Activated CD8-positive, alpha-beta memory T cell treated with anti-CD3 and anti-CD28 coated beads, Interleukin-2, amount 10 ng/mL, durations not matched to agents 7 days and 5 days (primary cell): ENCODE measurements at regions of chr12 and their contacts with region 1.

Region 1: DNA sequence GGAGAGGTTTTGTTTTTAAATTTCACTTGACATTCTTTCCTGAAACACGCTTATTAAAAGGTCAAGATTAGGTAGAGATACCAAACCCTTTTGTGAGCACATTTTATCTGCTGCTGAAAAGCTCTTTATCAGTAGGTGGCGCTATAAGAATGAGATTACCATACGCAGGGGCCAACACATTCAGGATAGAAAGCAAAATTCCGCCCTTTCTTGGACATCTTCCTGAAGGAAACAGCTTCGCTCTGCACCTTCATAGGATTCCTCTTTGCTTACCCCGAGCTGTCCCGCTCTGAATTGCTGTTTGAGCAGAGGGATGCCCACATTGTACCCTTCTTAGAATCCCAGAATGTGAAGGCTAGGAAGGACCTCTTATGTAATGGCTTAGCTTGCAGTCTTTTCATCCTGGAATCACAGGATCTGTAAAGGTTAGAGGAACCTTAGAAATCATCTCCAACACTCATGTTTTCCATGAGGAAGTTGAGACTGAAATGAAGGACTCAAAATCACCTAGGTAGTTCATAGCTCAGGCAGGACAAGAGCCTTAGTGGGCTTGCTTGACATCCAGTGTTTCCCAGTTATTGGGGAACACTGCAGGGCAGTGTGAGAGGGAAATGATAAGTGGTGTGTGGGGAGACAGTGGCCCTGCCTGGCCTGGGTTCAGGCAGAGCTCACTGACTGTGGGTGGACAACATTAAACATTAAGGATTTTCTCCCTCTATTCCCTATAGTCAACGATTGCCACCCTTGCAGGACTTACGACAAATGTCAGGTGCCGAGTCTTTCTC is 38.7 kb upstream of the CRY1 start:
- DNase-seq: peak; percentile 40
- ATAC-seq: no peak
- H3K4me3 Mint-ChIP-seq: no peak overlapping the region
- H3K27ac Mint-ChIP-seq: no peak overlapping the region
- H3K4me1 Mint-ChIP-seq: peaks cover 7% of the 10 kb centered on the region
- H3K27me3 Mint-ChIP-seq: peaks cover 5% of the 10 kb centered on the region

Region 2: DNA sequence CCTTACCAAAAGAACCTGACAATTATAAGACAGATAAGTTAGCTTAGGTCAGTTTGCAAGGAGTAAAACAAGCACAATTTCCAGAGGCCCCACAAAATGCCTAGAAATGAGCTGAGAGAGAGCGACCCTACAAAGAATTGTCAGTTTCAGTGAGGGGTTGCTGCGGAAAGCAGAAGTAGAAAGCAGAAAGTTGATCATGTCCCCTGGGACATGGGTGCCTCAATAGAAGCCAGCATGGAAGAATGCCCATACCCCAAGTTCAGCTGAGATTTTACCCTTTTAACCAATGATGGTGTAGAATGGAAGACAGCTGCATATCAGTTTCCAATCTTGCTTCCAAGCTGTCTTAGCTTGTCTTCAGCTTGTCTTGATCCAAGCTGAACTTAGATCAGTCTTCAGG is 16.9 kb before region 1 on chr12:
- CTCF ChIA-PET with region 1: interaction called, 19 read pairs
- DNase-seq: no peak
- ATAC-seq: no peak
- H3K4me3 Mint-ChIP-seq: no peak overlapping the region
- H3K27ac Mint-ChIP-seq: no peak overlapping the region
- H3K4me1 Mint-ChIP-seq: peaks cover 2% of the 10 kb centered on the region
- H3K27me3 Mint-ChIP-seq: peaks cover 26% of the 10 kb centered on the region

Region 3: GRCh38 chr12:107317751-107318613 is 186.0 kb after region 1 on chr12:
- CTCF ChIA-PET with region 1: interaction called, 10 read pairs
- DNase-seq: peak; percentile 93
- ATAC-seq: peak; percentile 80
- H3K4me3 Mint-ChIP-seq: peak overlapping the region; percentile 79
- H3K27ac Mint-ChIP-seq: no peak overlapping the region
- H3K4me1 Mint-ChIP-seq: peaks cover 33% of the 10 kb centered on the region
- H3K27me3 Mint-ChIP-seq: peaks cover 54% of the 10 kb centered on the region

Region 4: DNA sequence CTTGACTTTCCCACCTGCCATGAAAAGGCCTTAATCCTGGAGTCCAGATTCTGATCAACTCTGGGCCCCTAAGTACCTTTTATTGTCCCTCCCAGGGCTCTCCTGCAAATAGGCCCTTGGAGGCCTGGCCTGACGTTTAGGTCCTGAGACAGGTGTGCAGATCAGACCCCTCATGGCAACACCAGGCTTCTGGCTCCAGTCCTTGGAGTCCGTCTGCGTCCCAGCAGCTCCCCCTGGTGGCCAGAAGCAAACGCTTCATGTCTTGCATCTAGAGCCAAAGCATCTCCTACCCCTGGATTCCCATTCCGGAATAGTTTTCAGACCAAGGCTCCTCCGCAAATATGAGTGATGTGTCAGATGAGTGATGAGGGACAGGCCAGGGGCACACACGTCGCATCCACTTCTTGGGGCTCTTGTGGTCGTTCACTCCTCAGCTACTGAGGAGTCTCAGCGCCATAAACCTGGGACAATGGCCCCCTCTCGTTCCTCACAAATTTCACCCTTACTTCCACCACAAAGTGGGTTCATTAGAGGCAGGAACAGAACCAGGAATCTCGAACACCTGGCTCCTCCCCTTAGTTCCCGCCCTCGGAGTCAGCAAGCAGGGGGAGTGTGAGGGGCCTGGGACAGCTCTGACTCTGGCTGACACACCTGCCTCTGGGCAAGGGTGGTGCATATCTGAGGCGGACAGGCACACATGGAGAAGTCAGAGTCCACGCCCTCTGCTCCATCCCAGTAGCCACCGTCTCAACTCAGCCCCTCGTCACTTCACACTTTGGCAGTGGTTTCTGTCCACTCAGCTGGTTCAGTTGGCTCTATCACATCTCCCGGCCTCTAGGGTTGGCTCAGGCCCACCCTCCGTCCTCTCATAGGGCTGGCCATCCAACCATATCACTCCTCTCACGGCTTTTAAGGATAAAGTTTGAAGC is 475.7 kb after region 1 on chr12:
- CTCF ChIA-PET with region 1: interaction called, 194 read pairs
- DNase-seq: peak; percentile 84
- ATAC-seq: peak; percentile 73
- H3K4me3 Mint-ChIP-seq: no peak overlapping the region
- H3K27ac Mint-ChIP-seq: no peak overlapping the region
- H3K4me1 Mint-ChIP-seq: no peaks in the 10 kb centered on the region
- H3K27me3 Mint-ChIP-seq: no peaks in the 10 kb centered on the region